ENCODE measurements at regions of chr3 and their contacts with region 1.

Region 1: DNA sequence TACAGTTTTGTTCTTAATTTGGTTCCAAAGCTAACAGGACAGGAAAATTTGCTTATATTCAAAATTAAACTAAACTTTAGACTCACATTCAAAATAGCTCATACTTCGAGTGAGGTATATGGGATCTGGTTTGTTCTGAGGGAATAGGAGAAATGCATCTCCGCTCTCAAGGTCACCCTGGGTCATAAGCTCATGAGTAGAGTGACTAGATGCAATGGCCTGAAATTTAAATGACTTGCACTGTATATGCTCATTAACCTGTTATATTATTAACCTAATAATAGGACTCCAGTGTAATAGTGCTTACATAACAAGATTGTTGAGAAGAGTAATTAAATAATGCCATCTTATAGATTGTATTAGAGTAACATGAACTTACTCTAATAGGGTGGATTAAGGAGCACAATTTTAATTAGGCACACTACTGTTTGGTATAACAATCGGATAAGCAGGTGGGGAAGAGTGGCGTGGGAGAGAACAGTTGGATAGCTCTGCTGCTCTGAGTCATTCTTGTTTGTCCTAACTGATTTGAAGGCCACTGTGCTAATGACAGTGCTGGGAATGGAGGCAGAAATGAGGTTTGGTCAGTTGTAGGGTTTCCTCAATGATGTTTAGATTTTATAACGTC is 5.2 kb downstream of the NKTR start:
- DNase-seq: no peak
- H3K4me3 ChIP-seq: no peak overlapping the region
- H3K27ac ChIP-seq: no peak overlapping the region
- H3K4me1 ChIP-seq: peaks cover 9 to 56% (median 29%) of the 10 kb centered on the region in 4 donors
- H3K27me3 ChIP-seq: no peaks in the 10 kb centered on the region
- CTCF ChIP-seq: no peak
- EP300 ChIP-seq: no peak
- POLR2A ChIP-seq: no peak

Region 2: DNA sequence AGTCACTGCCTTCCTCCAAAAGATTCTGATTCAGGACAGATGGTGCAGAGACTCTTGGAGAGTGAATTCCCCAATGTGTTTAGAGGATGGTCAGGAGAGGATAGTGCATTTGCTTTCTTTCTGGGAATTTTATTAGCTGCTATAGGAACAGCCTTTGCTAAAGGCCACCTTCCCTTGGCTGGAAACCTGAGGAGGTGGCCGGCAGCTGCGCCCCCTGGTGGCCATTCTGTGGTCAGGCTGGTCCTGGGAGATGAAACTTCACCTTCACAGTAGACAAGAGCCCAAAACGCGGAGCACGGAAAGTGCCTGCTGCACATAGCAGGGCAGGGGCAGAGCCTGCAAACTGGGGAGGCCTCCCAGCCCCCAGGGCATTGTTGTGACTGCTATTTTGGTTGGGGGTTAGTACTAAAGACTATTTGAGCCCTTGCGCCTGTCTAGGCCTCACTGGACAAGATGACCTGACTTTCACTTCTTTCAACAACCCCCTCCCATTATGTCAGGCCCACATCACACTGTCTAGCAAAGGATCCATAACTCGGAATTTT is 58.2 kb before region 1 on chr3:
- in situ Hi-C with region 1: no loop called
- intact Hi-C with region 1: loop called (anchors 2 kb)
- DNase-seq: peak; percentile 77
- H3K4me3 ChIP-seq: no peak overlapping the region
- H3K27ac ChIP-seq: no peak overlapping the region
- H3K4me1 ChIP-seq: peaks cover 15 to 31% (median 16%) of the 10 kb centered on the region in 4 donors
- H3K27me3 ChIP-seq: no peaks in the 10 kb centered on the region
- CTCF ChIP-seq: peak; percentile 89 to 97 (median 96)
- EP300 ChIP-seq: no peak
- POLR2A ChIP-seq: no peak

Measured in transverse colon (tissue), 4 donors.